ENCODE measurements at regions of chr13 and their contacts with region 1.

Region 1: DNA sequence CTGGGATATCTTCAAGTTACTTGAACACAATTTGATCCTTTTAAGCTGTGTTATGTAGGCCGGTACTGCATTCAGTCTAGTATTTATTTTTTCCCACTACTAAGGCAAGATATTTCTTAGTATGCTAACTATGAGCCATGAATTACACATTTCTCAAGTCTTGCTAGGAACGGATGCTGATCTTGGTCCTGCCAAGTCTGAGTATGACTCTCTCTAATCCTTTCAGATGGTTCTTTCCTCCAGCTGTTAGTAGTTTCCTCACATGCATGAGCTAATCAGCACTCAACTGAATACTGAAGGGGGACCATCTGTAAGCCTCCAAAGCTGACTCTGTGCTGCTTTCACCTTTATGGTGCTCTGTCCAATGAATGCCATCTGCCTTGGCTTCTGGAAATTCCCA is 460.3 kb downstream of the KCTD12 start:
- DNase-seq: no peak
- ATAC-seq: no peak
- H3K4me3 ChIP-seq: no peak overlapping the region
- H3K4me3 Mint-ChIP-seq: no peak overlapping the region
- H3K27ac ChIP-seq: no peak overlapping the region
- H3K27ac Mint-ChIP-seq: no peak overlapping the region
- H3K4me1 ChIP-seq: no peaks in the 10 kb centered on the region
- H3K4me1 Mint-ChIP-seq: no peaks in the 10 kb centered on the region
- H3K27me3 ChIP-seq: no peaks in the 10 kb centered on the region
- H3K27me3 Mint-ChIP-seq: peaks cover 0 to 4% of the 10 kb centered on the region in 2 donors

Region 2: GRCh38 chr13:76350399-76350798 is 75.5 kb before region 1 on chr13:
- CTCF ChIA-PET with region 1: no interaction called
- POLR2A ChIA-PET with region 1: no interaction called
- DNase-seq: no peak
- ATAC-seq: no peak
- H3K4me3 ChIP-seq: no peak overlapping the region
- H3K4me3 Mint-ChIP-seq: no peak overlapping the region
- H3K27ac ChIP-seq: no peak overlapping the region
- H3K27ac Mint-ChIP-seq: no peak overlapping the region
- H3K4me1 ChIP-seq: no peaks in the 10 kb centered on the region
- H3K4me1 Mint-ChIP-seq: no peaks in the 10 kb centered on the region
- H3K27me3 ChIP-seq: no peaks in the 10 kb centered on the region
- H3K27me3 Mint-ChIP-seq: no peaks in the 10 kb centered on the region

Region 3: GRCh38 chr13:76489274-76489673 is 63.3 kb after region 1 on chr13:
- CTCF ChIA-PET with region 1: interaction called in 1 of 2 experiments, 4 read pairs
- POLR2A ChIA-PET with region 1: interaction called in 1 of 2 experiments, 10 read pairs
- DNase-seq: no peak
- ATAC-seq: no peak
- H3K4me3 ChIP-seq: no peak overlapping the region
- H3K4me3 Mint-ChIP-seq: no peak overlapping the region
- H3K27ac ChIP-seq: no peak overlapping the region
- H3K27ac Mint-ChIP-seq: no peak overlapping the region
- H3K4me1 ChIP-seq: no peaks in the 10 kb centered on the region
- H3K4me1 Mint-ChIP-seq: no peaks in the 10 kb centered on the region
- H3K27me3 ChIP-seq: no peaks in the 10 kb centered on the region
- H3K27me3 Mint-ChIP-seq: peaks cover 10 to 12% of the 10 kb centered on the region in 2 donors

Region 4: GRCh38 chr13:77600701-77601100 is 1174.8 kb after region 1 on chr13:
- CTCF ChIA-PET with region 1: no interaction called
- POLR2A ChIA-PET with region 1: no interaction called
- DNase-seq: no peak
- ATAC-seq: no peak
- H3K4me3 ChIP-seq: no peak overlapping the region
- H3K4me3 Mint-ChIP-seq: no peak overlapping the region
- H3K27ac ChIP-seq: no peak overlapping the region
- H3K27ac Mint-ChIP-seq: no peak overlapping the region
- H3K4me1 ChIP-seq: no peaks in the 10 kb centered on the region
- H3K4me1 Mint-ChIP-seq: no peaks in the 10 kb centered on the region
- H3K27me3 ChIP-seq: peaks cover 0 to 3% of the 10 kb centered on the region in 2 experiments
- H3K27me3 Mint-ChIP-seq: peaks cover 4 to 8% of the 10 kb centered on the region in 2 donors